Esophagus muscularis mucosa (tissue), 4 donors: ENCODE measurements at regions of chr15 and their contacts with region 1.

Region 1: DNA sequence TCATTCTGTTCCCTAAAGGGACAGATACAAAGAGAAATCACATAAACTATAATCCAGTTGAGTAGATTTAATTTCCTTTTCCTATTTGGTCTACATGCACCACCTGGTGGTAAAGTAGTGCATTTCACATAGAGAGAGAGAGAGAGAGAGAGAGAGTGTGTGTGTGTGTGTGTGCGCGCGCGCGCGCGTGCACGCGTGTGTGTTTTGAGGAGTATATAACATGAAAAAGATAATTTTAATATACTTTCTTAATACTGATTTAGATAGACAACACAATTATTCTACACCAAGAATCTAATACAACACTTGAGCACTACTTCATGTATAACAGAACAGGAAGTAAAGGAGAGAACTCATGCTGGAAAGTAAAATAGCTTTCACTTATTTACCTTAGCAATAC is 1.1 kb upstream of the FGF7 start:
- DNase-seq: no peak
- H3K4me3 ChIP-seq: peak overlapping the region; percentile 50 to 66 (median 58)
- H3K27ac ChIP-seq: peak overlapping the region; percentile 65 to 75 (median 72)
- H3K4me1 ChIP-seq: peaks cover 0 to 17% (median 8%) of the 10 kb centered on the region in 4 donors
- H3K27me3 ChIP-seq: no peaks in the 10 kb centered on the region
- CTCF ChIP-seq: peak; percentile 80 to 89 (median 83)
- EP300 ChIP-seq: no peak
- POLR2A ChIP-seq: no peak

Region 2: DNA sequence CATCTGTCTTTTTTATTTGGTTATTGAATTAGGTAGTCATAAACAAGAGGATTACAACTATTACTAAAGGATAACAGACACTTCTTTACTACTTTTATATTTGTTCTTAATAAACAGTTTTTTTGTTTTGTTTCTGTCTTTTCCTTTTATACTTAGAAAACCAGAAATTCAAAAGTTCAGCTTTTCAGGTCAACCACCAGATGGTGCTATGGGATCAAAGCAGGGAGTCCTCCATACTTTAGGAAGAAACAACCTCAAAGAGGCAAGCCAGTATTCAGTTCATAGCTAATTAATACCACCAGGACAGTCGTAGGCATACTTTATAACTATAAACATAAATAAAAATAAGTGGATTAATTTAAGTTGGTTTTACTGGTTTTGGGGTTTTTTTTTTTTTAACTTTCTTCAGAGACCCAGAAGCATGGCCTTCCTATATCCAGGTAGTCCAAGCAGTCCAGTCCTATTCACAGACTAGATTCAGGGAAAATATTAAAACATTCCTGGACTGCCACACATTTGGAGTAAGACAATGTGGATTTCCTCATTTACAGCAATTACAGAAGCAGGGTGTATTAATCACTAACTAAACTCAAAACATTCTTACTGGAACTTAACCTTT is 560.1 kb before region 1 on chr15:
- intact Hi-C with region 1: loop called (anchors 5 kb)
- DNase-seq: no peak
- H3K4me3 ChIP-seq: no peak overlapping the region
- H3K27ac ChIP-seq: no peak overlapping the region
- H3K4me1 ChIP-seq: peaks cover 0 to 20% (median 15%) of the 10 kb centered on the region in 4 donors
- H3K27me3 ChIP-seq: no peaks in the 10 kb centered on the region
- CTCF ChIP-seq: peak; percentile 86 to 89 (median 88)
- EP300 ChIP-seq: no peak
- POLR2A ChIP-seq: no peak

Region 3: GRCh38 chr15:49235446-49236124 is 186.4 kb before region 1 on chr15:
- intact Hi-C with region 1: loop called (anchors 2 kb)
- DNase-seq: no peak
- H3K4me3 ChIP-seq: no peak overlapping the region
- H3K27ac ChIP-seq: peak overlapping the region; percentile 45 to 69 (median 47)
- H3K4me1 ChIP-seq: peaks cover 17 to 57% (median 53%) of the 10 kb centered on the region in 4 donors
- H3K27me3 ChIP-seq: no peaks in the 10 kb centered on the region
- CTCF ChIP-seq: peak; percentile 75 to 91 (median 79)
- EP300 ChIP-seq: no peak
- POLR2A ChIP-seq: no peak

Region 4: DNA sequence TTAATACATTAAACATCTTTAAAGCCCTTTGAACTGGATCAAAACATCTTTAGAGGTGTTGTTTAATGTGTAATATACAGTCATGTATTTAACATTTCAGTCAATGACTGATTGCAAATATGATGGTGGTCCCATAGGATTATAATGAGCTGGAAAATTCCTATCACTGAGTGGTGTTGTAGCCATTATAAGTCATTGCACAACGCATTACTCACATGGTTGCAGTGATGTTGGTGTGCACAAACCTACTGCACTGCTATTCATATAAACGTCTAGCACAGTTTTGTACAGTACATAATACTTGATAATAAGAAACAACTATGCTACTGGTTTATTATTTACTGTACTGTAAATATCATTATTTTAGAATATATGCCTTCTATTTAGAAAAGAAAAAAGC is 274.4 kb after region 1 on chr15:
- intact Hi-C with region 1: no loop called
- DNase-seq: no peak
- H3K4me3 ChIP-seq: no peak overlapping the region
- H3K27ac ChIP-seq: no peak overlapping the region
- H3K4me1 ChIP-seq: no peaks in the 10 kb centered on the region
- H3K27me3 ChIP-seq: no peaks in the 10 kb centered on the region
- CTCF ChIP-seq: no peak
- EP300 ChIP-seq: no peak
- POLR2A ChIP-seq: no peak

Region 5: GRCh38 chr15:49901996-49902684 is 480.1 kb after region 1 on chr15:
- intact Hi-C with region 1: loop called (anchors 10 kb)
- DNase-seq: no peak
- H3K4me3 ChIP-seq: peak overlapping the region in 3 of 4 donors; percentile 0 to 17 (median 0)
- H3K27ac ChIP-seq: peak overlapping the region; percentile 67 to 78 (median 70)
- H3K4me1 ChIP-seq: peaks cover 17 to 58% (median 49%) of the 10 kb centered on the region in 4 donors
- H3K27me3 ChIP-seq: no peaks in the 10 kb centered on the region
- CTCF ChIP-seq: peak in 1 of 3 experiments; percentile 29
- EP300 ChIP-seq: no peak
- POLR2A ChIP-seq: no peak

Region 6: GRCh38 chr15:50051803-50052419 is 629.9 kb after region 1 on chr15:
- intact Hi-C with region 1: loop called (anchors 5 kb)
- DNase-seq: no peak
- H3K4me3 ChIP-seq: no peak overlapping the region
- H3K27ac ChIP-seq: peak overlapping the region in 3 of 4 donors; percentile 32 to 37 (median 35)
- H3K4me1 ChIP-seq: peaks cover 3 to 42% (median 29%) of the 10 kb centered on the region in 4 donors
- H3K27me3 ChIP-seq: no peaks in the 10 kb centered on the region
- CTCF ChIP-seq: peak; percentile 68 to 74 (median 70)
- EP300 ChIP-seq: no peak
- POLR2A ChIP-seq: no peak

Region 7: DNA sequence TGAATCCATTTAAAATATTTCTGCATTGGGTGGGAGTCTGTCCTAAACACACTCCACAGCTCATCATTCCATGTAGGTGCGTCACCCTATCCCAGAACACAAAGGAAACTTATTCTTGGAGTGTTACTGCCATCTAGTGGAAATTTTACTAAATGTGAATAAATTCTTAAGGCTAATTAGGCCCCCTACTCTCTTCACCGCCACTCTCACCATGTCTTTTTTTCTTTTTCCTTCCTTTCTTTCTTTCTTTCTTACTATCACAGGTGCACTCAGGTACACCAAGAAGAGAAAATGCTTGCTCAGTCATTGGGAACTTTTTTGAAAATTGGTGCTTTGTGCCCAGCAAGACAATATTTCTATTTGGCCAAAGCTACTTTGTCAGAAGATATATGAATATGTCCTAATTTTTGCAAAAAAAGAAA is 723.5 kb after region 1 on chr15:
- intact Hi-C with region 1: loop called (anchors 5 kb)
- DNase-seq: no peak
- H3K4me3 ChIP-seq: no peak overlapping the region
- H3K27ac ChIP-seq: no peak overlapping the region
- H3K4me1 ChIP-seq: peaks cover 0 to 8% (median 6%) of the 10 kb centered on the region in 4 donors
- H3K27me3 ChIP-seq: no peaks in the 10 kb centered on the region
- CTCF ChIP-seq: peak; percentile 56 to 62 (median 58)
- EP300 ChIP-seq: no peak
- POLR2A ChIP-seq: no peak